CD8-positive, alpha-beta T cell (primary cell): ENCODE measurements at regions of chr3 and their contacts with region 1.

Region 1: GRCh38 chr3:15268033-15268631 is 62.1 kb downstream of the CAPN7 start:
- DNase-seq: peak; percentile 69 to 92 (median 87)
- ATAC-seq: peak; percentile 50
- H3K4me3 ChIP-seq: no peak overlapping the region
- H3K4me3 Mint-ChIP-seq: no peak overlapping the region
- H3K27ac ChIP-seq: peak overlapping the region in 1 of 2 experiments; percentile 77
- H3K27ac Mint-ChIP-seq: no peak overlapping the region
- H3K4me1 ChIP-seq: peaks cover 64% of the 10 kb centered on the region
- H3K4me1 Mint-ChIP-seq: peaks cover 57% of the 10 kb centered on the region
- H3K27me3 ChIP-seq: no peaks in the 10 kb centered on the region
- H3K27me3 Mint-ChIP-seq: no peaks in the 10 kb centered on the region
- CTCF ChIP-seq: peak; percentile 83

Region 2: GRCh38 chr3:15256861-15257341 is 11.2 kb before region 1 on chr3:
- CTCF ChIA-PET with region 1: interaction called, 39 read pairs
- POLR2A ChIA-PET with region 1: interaction called, 7 read pairs
- intact Hi-C with region 1: no loop called
- DNase-seq: no peak
- ATAC-seq: no peak
- H3K4me3 ChIP-seq: no peak overlapping the region
- H3K4me3 Mint-ChIP-seq: no peak overlapping the region
- H3K27ac ChIP-seq: no peak overlapping the region
- H3K27ac Mint-ChIP-seq: peak overlapping the region; percentile 69
- H3K4me1 ChIP-seq: no peaks in the 10 kb centered on the region
- H3K4me1 Mint-ChIP-seq: peaks cover 1% of the 10 kb centered on the region
- H3K27me3 ChIP-seq: no peaks in the 10 kb centered on the region
- H3K27me3 Mint-ChIP-seq: no peaks in the 10 kb centered on the region
- CTCF ChIP-seq: no peak

Region 3: GRCh38 chr3:15319575-15319974 is 51.4 kb after region 1 on chr3:
- CTCF ChIA-PET with region 1: interaction called, 17 read pairs
- POLR2A ChIA-PET with region 1: interaction called, 3 read pairs
- intact Hi-C with region 1: loop called (anchors 5 kb)
- DNase-seq: no peak
- ATAC-seq: no peak
- H3K4me3 ChIP-seq: no peak overlapping the region
- H3K4me3 Mint-ChIP-seq: no peak overlapping the region
- H3K27ac ChIP-seq: no peak overlapping the region
- H3K27ac Mint-ChIP-seq: no peak overlapping the region
- H3K4me1 ChIP-seq: peaks cover 32% of the 10 kb centered on the region
- H3K4me1 Mint-ChIP-seq: peaks cover 55% of the 10 kb centered on the region
- H3K27me3 ChIP-seq: no peaks in the 10 kb centered on the region
- H3K27me3 Mint-ChIP-seq: no peaks in the 10 kb centered on the region
- CTCF ChIP-seq: no peak

Region 4: DNA sequence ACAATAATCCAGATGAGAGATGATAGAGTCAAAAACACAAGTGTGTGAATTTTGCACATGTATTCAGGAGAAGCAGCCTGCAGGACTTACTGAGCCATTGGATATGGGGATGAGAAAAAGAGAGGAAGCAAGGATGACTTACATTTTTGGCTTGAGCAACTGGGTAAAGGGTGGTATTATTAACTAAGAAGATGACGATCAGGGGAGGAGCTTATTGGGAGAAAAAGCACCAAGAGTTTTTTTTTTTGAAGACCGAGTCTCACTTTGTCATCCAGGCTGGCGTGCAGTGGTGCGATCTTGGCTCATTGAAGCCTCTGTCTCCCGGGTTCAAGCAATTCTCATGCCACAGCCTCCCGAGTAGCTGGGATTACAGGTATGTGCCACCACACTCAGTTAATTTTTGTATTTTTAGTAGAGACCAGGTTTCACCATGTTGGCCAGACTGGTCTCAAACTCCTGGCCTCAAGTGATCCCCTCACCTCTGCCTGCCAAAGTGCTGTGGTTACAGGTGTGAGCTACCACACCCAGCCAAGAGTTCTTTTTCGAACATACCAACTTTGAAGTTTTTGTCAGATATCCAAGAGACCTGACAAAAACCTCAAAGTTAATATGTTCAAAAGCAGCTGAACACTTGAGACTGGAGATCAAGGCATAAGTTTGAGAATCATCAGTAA is 79.1 kb after region 1 on chr3:
- CTCF ChIA-PET with region 1: interaction called, 18 read pairs
- POLR2A ChIA-PET with region 1: interaction called, 4 read pairs
- intact Hi-C with region 1: no loop called
- DNase-seq: peak in 2 of 9 experiments; percentile 43 to 54
- ATAC-seq: peak; percentile 29
- H3K4me3 ChIP-seq: no peak overlapping the region
- H3K4me3 Mint-ChIP-seq: peak overlapping the region; percentile 69
- H3K27ac ChIP-seq: no peak overlapping the region
- H3K27ac Mint-ChIP-seq: peak overlapping the region; percentile 73
- H3K4me1 ChIP-seq: peaks cover 34% of the 10 kb centered on the region
- H3K4me1 Mint-ChIP-seq: peaks cover 35% of the 10 kb centered on the region
- H3K27me3 ChIP-seq: no peaks in the 10 kb centered on the region
- H3K27me3 Mint-ChIP-seq: no peaks in the 10 kb centered on the region
- CTCF ChIP-seq: no peak

Region 5: DNA sequence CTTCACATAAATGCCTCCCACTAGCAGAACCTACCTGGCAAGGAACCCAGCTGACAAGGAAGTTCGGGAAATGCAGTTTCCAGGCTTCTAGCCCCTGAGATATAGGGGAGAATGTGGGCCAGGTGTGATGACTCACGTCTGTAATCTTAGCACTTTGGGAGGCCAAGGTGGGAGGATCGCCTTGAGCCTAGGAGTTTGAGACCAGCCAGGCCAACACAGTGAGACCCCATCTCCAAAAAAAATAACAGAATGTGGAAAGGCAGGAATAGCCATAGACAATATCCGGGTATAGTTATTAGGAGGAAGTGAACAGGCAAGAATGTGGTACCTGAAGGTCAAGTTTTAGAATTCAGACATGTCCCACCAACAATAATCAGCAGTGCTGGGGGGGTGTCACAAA is 104.8 kb after region 1 on chr3:
- CTCF ChIA-PET with region 1: interaction called, 55 read pairs
- POLR2A ChIA-PET with region 1: interaction called, 11 read pairs
- intact Hi-C with region 1: loop called (anchors 1 kb)
- DNase-seq: no peak
- ATAC-seq: no peak
- H3K4me3 ChIP-seq: no peak overlapping the region
- H3K4me3 Mint-ChIP-seq: no peak overlapping the region
- H3K27ac ChIP-seq: no peak overlapping the region
- H3K27ac Mint-ChIP-seq: no peak overlapping the region
- H3K4me1 ChIP-seq: peaks cover 3% of the 10 kb centered on the region
- H3K4me1 Mint-ChIP-seq: peaks cover 4% of the 10 kb centered on the region
- H3K27me3 ChIP-seq: no peaks in the 10 kb centered on the region
- H3K27me3 Mint-ChIP-seq: no peaks in the 10 kb centered on the region
- CTCF ChIP-seq: no peak

Region 6: DNA sequence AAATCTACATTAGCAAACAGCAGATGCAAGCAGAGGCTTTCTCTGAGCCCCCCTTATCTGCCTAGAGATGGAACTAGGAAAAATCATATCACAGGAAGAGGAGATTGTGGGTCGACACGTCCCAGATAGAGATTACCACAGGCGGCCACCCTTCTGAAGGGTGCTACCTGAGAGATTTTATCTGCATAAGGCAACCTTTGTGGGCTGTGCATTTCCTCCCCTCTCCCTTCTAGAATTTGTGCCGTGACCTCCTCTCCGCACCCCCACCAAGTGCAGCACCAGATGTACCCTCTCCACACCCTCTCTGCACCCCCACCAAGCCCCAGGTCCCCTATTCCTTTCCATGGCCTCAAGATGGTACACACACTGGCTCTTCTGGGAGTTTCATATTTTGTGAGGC is 131.8 kb after region 1 on chr3:
- CTCF ChIA-PET with region 1: interaction called, 107 read pairs
- POLR2A ChIA-PET with region 1: no interaction called
- intact Hi-C with region 1: loop called (anchors 1 kb)
- DNase-seq: peak in 5 of 9 experiments; percentile 1 to 41 (median 22)
- ATAC-seq: peak; percentile 54
- H3K4me3 ChIP-seq: no peak overlapping the region
- H3K4me3 Mint-ChIP-seq: peak overlapping the region; percentile 4
- H3K27ac ChIP-seq: no peak overlapping the region
- H3K27ac Mint-ChIP-seq: no peak overlapping the region
- H3K4me1 ChIP-seq: peaks cover 13% of the 10 kb centered on the region
- H3K4me1 Mint-ChIP-seq: peaks cover 17% of the 10 kb centered on the region
- H3K27me3 ChIP-seq: no peaks in the 10 kb centered on the region
- H3K27me3 Mint-ChIP-seq: no peaks in the 10 kb centered on the region
- CTCF ChIP-seq: no peak

Region 7: DNA sequence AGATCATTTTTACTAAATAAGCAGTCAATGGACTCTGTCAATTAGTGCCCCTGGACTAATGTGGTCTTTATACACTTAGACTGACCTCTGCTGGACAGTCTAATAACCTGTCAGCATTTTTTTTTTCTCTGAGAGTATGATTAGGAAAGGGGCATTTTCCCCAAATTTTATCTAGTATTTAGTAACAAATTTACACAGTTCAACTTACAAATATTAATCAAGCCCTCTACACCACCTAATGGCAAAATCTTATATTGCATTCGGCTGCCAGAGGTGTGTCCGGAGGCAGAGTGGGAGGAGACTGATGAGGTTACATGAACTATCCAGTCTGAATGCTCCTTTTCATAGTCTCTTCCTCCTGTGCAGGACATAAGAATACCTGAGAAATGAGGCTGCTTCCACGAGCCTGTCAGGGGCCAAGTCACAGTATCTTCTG is 289.4 kb after region 1 on chr3:
- CTCF ChIA-PET with region 1: no interaction called
- POLR2A ChIA-PET with region 1: no interaction called
- intact Hi-C with region 1: loop called (anchors 1 to 2 kb)
- DNase-seq: peak in 7 of 9 experiments; percentile 8 to 80 (median 43)
- ATAC-seq: peak; percentile 99
- H3K4me3 ChIP-seq: no peak overlapping the region
- H3K4me3 Mint-ChIP-seq: no peak overlapping the region
- H3K27ac ChIP-seq: no peak overlapping the region
- H3K27ac Mint-ChIP-seq: no peak overlapping the region
- H3K4me1 ChIP-seq: peaks cover 3% of the 10 kb centered on the region
- H3K4me1 Mint-ChIP-seq: peaks cover 16% of the 10 kb centered on the region
- H3K27me3 ChIP-seq: no peaks in the 10 kb centered on the region
- H3K27me3 Mint-ChIP-seq: no peaks in the 10 kb centered on the region
- CTCF ChIP-seq: peak; percentile 76

Region 8: DNA sequence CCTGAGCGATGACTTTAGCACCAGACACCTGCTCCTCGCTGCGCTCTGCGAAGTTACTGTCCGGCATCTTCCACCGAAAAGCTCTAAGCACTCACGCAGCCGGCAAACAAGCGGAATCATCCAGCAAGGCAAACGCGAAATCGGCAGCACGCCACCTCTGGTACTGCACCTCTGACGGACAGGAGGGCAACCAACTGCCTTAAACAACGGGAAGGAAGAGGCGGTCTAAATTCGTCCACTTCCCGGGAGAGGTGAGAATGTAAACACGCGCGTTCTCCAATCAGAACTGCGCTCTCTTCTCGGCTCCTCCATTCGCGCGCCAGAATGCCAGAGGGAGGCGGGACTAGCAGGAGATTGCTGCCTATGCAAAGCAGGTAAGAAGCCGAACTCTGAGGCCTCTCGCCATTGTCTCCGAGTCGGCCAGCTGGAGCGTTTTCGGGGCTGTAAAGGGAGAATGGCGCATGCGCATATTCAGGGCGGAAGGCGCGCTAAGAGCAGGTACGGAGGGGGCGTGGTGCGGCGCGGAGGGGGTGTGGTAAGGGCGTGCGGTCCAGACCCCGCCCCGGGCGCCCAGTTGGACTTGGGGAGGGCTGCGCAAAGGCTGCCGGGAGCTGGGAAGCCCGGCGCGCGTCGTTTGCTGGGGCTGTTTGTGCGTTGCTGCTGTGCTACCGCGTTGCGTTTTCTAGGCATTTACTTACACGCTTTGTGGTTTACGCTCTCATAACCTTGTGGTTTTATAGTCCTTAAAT is 333.4 kb after region 1 on chr3 and contains the starts of genes BTD and HACL1:
- CTCF ChIA-PET with region 1: no interaction called
- POLR2A ChIA-PET with region 1: no interaction called
- intact Hi-C with region 1: no loop called
- DNase-seq: peak; percentile 96 to 100 (median 99)
- ATAC-seq: peak; percentile 89
- H3K4me3 ChIP-seq: peak within 1 kb of the TSS; percentile 82 to 94
- H3K4me3 Mint-ChIP-seq: peak within 1 kb of the TSS; percentile 100
- H3K27ac ChIP-seq: peak within 1 kb of the TSS; percentile 82 to 88
- H3K27ac Mint-ChIP-seq: peak within 1 kb of the TSS; percentile 99
- H3K4me1 ChIP-seq: peaks cover 19% of the 10 kb centered on the region
- H3K4me1 Mint-ChIP-seq: peaks cover 54% of the 10 kb centered on the region
- H3K27me3 ChIP-seq: no peaks in the 10 kb centered on the region
- H3K27me3 Mint-ChIP-seq: no peaks in the 10 kb centered on the region
- CTCF ChIP-seq: peak; percentile 24
- total RNA-seq, gene BTD: 9.1 to 11.3 TPM
- total RNA-seq, gene HACL1: 30.1 to 33.4 TPM